ENCODE measurements at regions of chr6 and their contacts with region 1.

Region 1: GRCh38 chr6:56902641-56903464 is 52.1 kb upstream of the BEND6 start:
- H3K4me3 Mint-ChIP-seq: no peak overlapping the region
- H3K27ac Mint-ChIP-seq: no peak overlapping the region
- H3K4me1 Mint-ChIP-seq: no peaks in the 10 kb centered on the region
- H3K27me3 Mint-ChIP-seq: no peaks in the 10 kb centered on the region

Region 2: DNA sequence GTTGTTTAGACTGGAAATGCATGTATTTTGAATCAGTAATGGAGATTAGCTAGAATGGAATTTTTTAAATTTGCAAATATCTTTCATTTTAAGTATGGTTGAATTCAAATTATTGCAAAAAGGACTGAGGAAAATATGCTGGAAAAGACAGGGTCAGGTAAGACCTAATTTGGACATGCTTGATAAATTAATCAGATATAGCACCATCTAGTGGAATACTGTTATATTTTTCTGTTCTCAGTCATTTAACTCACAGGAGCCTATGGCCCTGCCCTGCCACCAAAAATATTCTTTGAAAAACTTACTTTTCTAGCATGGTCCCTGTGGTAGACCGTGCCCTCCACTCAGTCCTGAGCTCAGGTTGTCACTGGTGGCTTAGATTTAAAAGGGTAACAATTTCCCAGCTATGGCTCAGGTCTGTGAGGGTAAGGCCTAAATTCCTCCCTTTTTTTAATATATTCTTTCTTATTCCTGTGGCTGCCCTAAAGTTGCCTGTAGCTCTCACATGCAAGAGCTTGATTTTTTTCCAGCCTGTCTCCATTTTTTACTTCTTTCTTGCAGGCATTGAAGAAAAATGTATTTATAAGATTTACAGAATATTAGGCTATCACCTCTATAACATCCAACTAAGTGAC is 118.3 kb after region 1 on chr6:
- intact Hi-C with region 1: loop called (anchors 1 kb)
- H3K4me3 Mint-ChIP-seq: no peak overlapping the region
- H3K27ac Mint-ChIP-seq: no peak overlapping the region
- H3K4me1 Mint-ChIP-seq: no peaks in the 10 kb centered on the region
- H3K27me3 Mint-ChIP-seq: no peaks in the 10 kb centered on the region

Region 3: GRCh38 chr6:57089687-57090460 is 187.0 kb after region 1 on chr6 and contains the start of gene ZNF451:
- intact Hi-C with region 1: loop called (anchors 10 kb)
- H3K4me3 Mint-ChIP-seq: peak within 1 kb of the TSS; percentile 94
- H3K27ac Mint-ChIP-seq: peak within 1 kb of the TSS; percentile 93
- H3K4me1 Mint-ChIP-seq: peaks cover 38% of the 10 kb centered on the region
- H3K27me3 Mint-ChIP-seq: no peaks in the 10 kb centered on the region